ENCODE measurements at regions of chr11 and their contacts with region 1.

Region 1: GRCh38 chr11:3109921-3110706 is 52.9 kb upstream of the CARS1 start:
- DNase-seq: peak; percentile 76
- H3K4me3 ChIP-seq: no peak overlapping the region
- H3K27ac ChIP-seq: no peak overlapping the region
- H3K4me1 ChIP-seq: no peaks in the 10 kb centered on the region
- H3K27me3 ChIP-seq: no peaks in the 10 kb centered on the region
- CTCF ChIP-seq: peak; percentile 49
- EP300 ChIP-seq: no peak
- RAD21 ChIP-seq: peak; percentile 58

Region 2: GRCh38 chr11:3195251-3196160 is 85.4 kb after region 1 on chr11:
- CTCF ChIA-PET with region 1: no interaction called
- POLR2A ChIA-PET with region 1: no interaction called
- DNase-seq: no peak
- H3K4me3 ChIP-seq: no peak overlapping the region
- H3K27ac ChIP-seq: no peak overlapping the region; a peak in 1 of 4 replicates
- H3K4me1 ChIP-seq: peaks cover 0 to 13% of the 10 kb centered on the region in 2 experiments; a peak in 1 of 4 replicates
- H3K27me3 ChIP-seq: no peaks in the 10 kb centered on the region
- CTCF ChIP-seq: no peak
- EP300 ChIP-seq: no peak
- RAD21 ChIP-seq: no peak; the same call in 1 of the 2 replicates

Region 3: DNA sequence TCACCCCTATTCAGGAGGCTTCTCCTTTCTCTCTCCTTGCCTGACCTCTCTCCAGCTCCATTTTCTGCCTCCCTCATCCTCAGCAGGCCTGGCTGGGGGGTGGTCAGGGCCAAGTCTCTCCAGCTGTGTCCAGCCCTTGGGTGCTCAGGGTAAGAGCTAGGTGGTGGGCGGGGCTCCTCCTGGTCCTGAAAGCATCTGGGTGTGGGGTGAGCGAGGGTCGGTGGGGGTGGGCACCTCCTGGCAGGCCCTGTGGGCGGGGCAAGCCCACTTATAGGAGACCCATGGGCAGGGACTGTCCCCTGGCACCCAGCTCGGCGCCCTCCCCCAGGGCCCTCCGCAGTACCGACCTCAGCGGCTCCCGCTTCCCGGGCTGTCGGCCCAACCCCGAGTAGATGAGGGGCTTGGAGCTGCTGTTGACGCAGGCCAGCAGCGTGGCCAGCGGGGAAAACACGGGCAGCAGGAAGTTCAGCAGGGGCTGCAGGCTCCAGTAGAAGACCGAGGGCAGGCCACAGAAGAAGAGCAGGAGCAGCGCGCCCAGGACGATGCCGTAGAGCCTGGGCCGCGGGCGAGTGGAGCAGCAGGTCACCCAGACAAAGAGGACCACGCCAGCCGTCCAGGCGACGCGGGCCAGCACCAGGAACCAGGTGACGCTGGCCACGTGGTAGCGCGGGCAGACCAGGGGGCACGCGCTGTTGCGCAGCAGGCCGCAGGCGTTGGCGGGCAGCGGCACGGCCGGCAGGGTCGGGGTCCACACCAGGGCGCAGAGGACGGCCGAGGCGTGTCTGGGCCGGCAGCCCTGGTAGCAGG is 107.8 kb after region 1 on chr11:
- CTCF ChIA-PET with region 1: interaction called, 30 read pairs
- POLR2A ChIA-PET with region 1: no interaction called
- DNase-seq: peak; percentile 34
- H3K4me3 ChIP-seq: no peak overlapping the region
- H3K27ac ChIP-seq: no peak overlapping the region
- H3K4me1 ChIP-seq: no peaks in the 10 kb centered on the region; a peak in 1 of 4 replicates
- H3K27me3 ChIP-seq: no peaks in the 10 kb centered on the region
- CTCF ChIP-seq: no peak
- EP300 ChIP-seq: no peak
- RAD21 ChIP-seq: no peak